SK-N-SH (cell line): ENCODE measurements at regions of chr7 and their contacts with region 1.

Region 1: DNA sequence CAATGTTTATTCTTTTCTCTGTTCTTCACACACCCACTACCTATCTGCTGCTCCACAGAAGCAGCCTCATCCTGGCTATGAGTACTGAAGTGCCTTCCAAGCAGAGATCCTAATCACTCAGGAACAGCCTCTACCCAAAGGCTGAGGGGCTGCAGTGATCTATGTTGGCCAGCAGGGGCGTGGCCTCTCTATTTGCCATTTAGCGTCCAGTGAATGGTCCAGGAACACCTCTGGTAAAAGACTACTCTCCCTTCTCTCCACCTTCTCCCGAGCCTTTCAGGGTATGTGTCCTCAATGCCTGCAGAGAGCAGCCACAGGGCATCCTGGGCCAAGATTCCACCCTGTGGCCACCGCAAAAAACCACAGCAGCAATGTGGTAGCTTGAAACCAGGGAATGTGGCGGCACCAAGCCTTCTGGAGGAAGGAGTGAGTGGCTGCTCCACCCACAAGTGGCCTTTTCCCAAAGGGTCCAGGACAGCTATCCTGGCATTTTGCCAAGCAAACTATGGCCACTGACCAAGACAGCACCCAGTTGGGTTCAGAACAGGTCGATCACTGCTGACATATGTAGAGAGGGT is 70.9 kb downstream of the SYPL1 start:
- DNase-seq: peak; percentile 80
- H3K4me3 ChIP-seq: no peak overlapping the region; a peak in 1 of 4 replicates
- H3K27ac ChIP-seq: no peak overlapping the region
- H3K4me1 ChIP-seq: peaks cover 4 to 28% of the 10 kb centered on the region in 2 experiments; a peak in 2 of 4 replicates
- H3K27me3 ChIP-seq: no peaks in the 10 kb centered on the region
- CTCF ChIP-seq: peak; percentile 89
- EP300 ChIP-seq: 0 out of 4 replicates have a peak, but pooled peaks of 1 of the 2 experiments have one; percentile 18
- RAD21 ChIP-seq: peak; percentile 60

Region 2: GRCh38 chr7:105652359-105652993 is 388.8 kb before region 1 on chr7:
- CTCF ChIA-PET with region 1: interaction called, 77 read pairs
- POLR2A ChIA-PET with region 1: no interaction called
- DNase-seq: peak; percentile 91
- H3K4me3 ChIP-seq: no peak overlapping the region
- H3K27ac ChIP-seq: no peak overlapping the region
- H3K4me1 ChIP-seq: peaks cover 22 to 36% of the 10 kb centered on the region in 2 experiments
- H3K27me3 ChIP-seq: no peaks in the 10 kb centered on the region
- CTCF ChIP-seq: peak; percentile 93
- EP300 ChIP-seq: no peak
- RAD21 ChIP-seq: peak; percentile 97

Region 3: GRCh38 chr7:105748701-105749100 is 292.5 kb before region 1 on chr7:
- CTCF ChIA-PET with region 1: interaction called, 70 read pairs
- POLR2A ChIA-PET with region 1: no interaction called
- DNase-seq: no peak
- H3K4me3 ChIP-seq: no peak overlapping the region
- H3K27ac ChIP-seq: no peak overlapping the region
- H3K4me1 ChIP-seq: no peaks in the 10 kb centered on the region
- H3K27me3 ChIP-seq: no peaks in the 10 kb centered on the region
- CTCF ChIP-seq: no peak
- EP300 ChIP-seq: no peak
- RAD21 ChIP-seq: no peak

Region 4: GRCh38 chr7:105906695-105907094 is 134.5 kb before region 1 on chr7:
- CTCF ChIA-PET with region 1: interaction called, 20 read pairs
- POLR2A ChIA-PET with region 1: no interaction called
- DNase-seq: no peak
- H3K4me3 ChIP-seq: no peak overlapping the region
- H3K27ac ChIP-seq: peak overlapping the region in 1 of 2 experiments; percentile 14; a peak in 1 of 4 replicates
- H3K4me1 ChIP-seq: peaks cover 0 to 13% of the 10 kb centered on the region in 2 experiments; a peak in 1 of 4 replicates
- H3K27me3 ChIP-seq: no peaks in the 10 kb centered on the region
- CTCF ChIP-seq: no peak
- EP300 ChIP-seq: no peak
- RAD21 ChIP-seq: no peak

Region 5: DNA sequence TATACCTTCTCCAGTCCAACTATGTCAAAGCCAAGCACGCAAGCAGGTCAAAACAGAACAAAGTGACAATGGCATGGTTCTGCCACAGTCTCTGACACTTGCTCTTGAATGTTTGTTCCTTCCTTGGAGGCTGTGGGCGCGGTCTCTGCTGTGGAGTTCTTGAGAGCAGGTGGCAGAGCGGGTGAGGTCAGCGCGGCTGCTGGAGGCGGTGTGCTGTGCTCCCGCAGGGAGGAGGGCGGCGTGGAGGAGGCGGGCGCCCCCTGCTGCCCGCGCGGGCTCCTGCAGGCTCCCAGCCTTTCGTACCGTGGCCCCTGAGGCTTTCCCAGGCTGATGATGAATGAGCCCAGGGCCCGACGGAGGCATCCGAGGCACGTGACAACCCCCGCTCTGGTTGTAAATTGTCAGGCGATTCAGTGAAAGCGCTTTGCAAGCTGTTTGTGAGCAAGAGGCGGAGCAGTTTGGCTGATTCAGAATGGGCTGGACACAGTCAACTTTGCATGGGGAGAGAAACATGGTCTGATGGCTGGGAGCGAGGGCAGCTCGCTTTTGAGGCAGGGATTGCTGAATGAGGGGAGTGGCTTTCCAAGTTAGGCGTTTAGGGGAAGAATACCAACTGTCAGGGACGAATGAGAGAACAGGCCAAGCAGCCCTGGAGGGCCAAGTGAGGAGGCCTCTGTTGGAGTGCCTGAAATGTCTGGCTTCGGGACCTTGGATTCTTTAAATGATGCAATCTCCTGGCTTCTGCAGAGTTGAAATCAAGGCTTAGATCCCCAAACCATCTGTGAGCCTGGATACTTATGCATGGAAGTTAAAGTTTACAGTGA is 31.6 kb before region 1 on chr7:
- CTCF ChIA-PET with region 1: interaction called, 114 read pairs
- POLR2A ChIA-PET with region 1: no interaction called
- DNase-seq: peak; percentile 91
- H3K4me3 ChIP-seq: no peak overlapping the region; a peak in 1 of 4 replicates
- H3K27ac ChIP-seq: peak overlapping the region in 1 of 2 experiments; percentile 7; a peak in 1 of 4 replicates
- H3K4me1 ChIP-seq: peaks cover 8 to 24% of the 10 kb centered on the region in 2 experiments
- H3K27me3 ChIP-seq: no peaks in the 10 kb centered on the region
- CTCF ChIP-seq: peak; percentile 99
- EP300 ChIP-seq: 0 out of 4 replicates have a peak, but pooled peaks have one; percentile 26 to 36
- RAD21 ChIP-seq: peak; percentile 83

Region 6: GRCh38 chr7:106153891-106154449 is 112.7 kb after region 1 on chr7:
- CTCF ChIA-PET with region 1: interaction called, 183 read pairs
- POLR2A ChIA-PET with region 1: no interaction called
- DNase-seq: peak; percentile 86
- H3K4me3 ChIP-seq: no peak overlapping the region; a peak in 1 of 4 replicates
- H3K27ac ChIP-seq: no peak overlapping the region
- H3K4me1 ChIP-seq: peaks cover 10 to 19% of the 10 kb centered on the region in 2 experiments; a peak in 2 of 4 replicates
- H3K27me3 ChIP-seq: no peaks in the 10 kb centered on the region; the same call in 1 of the 2 replicates
- CTCF ChIP-seq: peak; percentile 100
- EP300 ChIP-seq: no peak
- RAD21 ChIP-seq: peak; percentile 100